CD14-positive monocyte (primary cell): ENCODE measurements at regions of chr1 and their contacts with region 1.

Region 1: DNA sequence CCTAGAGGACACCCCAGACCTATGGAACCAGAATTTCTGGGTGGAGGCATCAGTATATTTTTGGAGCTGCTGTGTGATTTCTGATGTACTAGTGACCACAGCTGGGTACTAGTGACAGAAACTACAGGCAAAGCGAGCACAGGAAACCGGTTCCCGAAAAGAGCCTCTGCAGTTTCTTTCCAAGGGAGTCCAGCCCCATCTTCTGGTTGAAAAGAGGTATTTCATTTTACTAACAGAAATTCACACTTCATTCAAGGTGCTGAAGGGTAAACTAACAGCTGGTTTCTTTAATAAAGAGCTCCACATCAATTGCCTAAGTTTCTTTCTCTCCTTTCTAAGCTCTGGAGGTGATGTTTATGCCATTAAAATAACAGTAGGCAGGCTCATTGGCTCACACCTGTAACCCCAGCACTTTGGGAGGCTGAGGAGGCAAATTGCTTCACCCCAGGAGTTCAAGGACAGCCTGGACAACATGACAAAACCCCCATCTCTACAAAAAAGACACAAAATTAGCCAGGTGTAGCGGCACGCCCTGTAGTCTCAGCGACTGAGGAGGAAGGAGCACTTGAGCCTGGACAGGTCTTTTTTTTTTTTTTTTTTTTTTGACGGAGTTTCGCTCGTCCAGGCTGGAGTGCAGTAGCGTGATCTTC is 22.0 kb downstream of the THAP3 start:
- DNase-seq: peak; percentile 25 to 43 (median 42)
- H3K4me3 ChIP-seq: no peak overlapping the region
- H3K4me3 Mint-ChIP-seq: no peak overlapping the region
- H3K27ac ChIP-seq: no peak overlapping the region
- H3K27ac Mint-ChIP-seq: no peak overlapping the region
- H3K4me1 ChIP-seq: no peaks in the 10 kb centered on the region
- H3K4me1 Mint-ChIP-seq: no peaks in the 10 kb centered on the region
- H3K27me3 ChIP-seq: no peaks in the 10 kb centered on the region
- H3K27me3 Mint-ChIP-seq: peaks cover 0 to 3% (median 0%) of the 10 kb centered on the region in 3 donors
- CTCF ChIP-seq: peak; percentile 75

Region 2: GRCh38 chr1:6489799-6490180 is 156.8 kb before region 1 on chr1:
- intact Hi-C with region 1: loop called (anchors 1 to 2 kb)
- DNase-seq: peak; percentile 24 to 49 (median 32)
- H3K4me3 ChIP-seq: no peak overlapping the region
- H3K4me3 Mint-ChIP-seq: peak overlapping the region; percentile 31 to 69
- H3K27ac ChIP-seq: no peak overlapping the region
- H3K27ac Mint-ChIP-seq: no peak overlapping the region
- H3K4me1 ChIP-seq: peaks cover 9 to 10% of the 10 kb centered on the region in 2 donors
- H3K4me1 Mint-ChIP-seq: peaks cover 5% of the 10 kb centered on the region
- H3K27me3 ChIP-seq: peaks cover 5 to 49% of the 10 kb centered on the region in 2 donors
- H3K27me3 Mint-ChIP-seq: peaks cover 48 to 74% (median 53%) of the 10 kb centered on the region in 3 donors
- CTCF ChIP-seq: peak; percentile 93